Right cardiac atrium (tissue), 5 donors: ENCODE measurements at regions of chr3 and their contacts with region 1.

Region 1: DNA sequence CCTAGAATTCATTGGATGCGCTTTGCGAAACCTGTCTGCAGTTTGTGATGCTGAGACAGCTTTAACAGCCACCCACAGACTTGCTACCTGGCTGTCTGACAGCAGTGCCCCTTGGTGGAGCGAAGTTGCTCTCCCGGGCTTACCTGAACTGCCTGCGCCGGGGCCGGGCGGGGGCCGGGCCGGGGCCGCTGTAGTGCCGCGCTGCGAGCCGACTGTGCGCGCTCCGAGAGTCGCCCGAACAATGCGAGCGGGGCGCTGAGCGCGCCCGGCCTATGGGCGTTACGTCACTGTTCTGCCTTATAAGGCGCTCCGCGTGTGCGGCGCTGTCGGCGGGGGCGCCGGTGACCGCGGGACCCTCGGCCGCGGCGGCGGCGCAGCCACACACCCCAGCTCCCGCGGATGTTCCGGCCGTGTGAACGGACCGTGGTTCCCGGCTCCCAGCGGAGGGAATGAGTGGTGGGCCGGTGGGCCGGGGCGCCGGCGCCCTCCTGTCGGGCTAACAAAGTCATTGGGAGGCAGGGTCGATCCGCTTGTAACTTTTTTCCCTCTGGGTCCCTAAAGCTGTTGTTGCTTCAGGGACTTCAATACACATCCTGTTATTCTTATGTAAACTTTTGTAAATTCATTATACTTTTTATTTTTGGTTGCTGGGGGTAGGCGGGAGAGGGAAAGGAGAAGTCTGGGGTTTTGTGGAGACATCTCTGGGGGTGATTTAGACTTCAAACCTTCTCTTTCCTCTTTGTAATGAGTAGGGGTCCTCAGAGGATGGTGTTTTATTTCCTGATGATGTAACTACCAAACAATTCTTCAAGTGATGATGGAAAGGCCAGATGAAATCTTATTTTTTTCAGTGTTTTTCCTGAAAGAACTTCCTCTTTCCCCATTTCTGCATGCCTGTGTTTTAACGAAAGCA is 58.5 kb downstream of the CMSS1 start:
- DNase-seq: peak; percentile 86 to 94 (median 93)
- ATAC-seq: peak; percentile 98
- H3K4me3 ChIP-seq: peak overlapping the region; percentile 99
- H3K27ac ChIP-seq: peak overlapping the region; percentile 99
- H3K4me1 ChIP-seq: peaks cover 3% of the 10 kb centered on the region
- H3K27me3 ChIP-seq: no peaks in the 10 kb centered on the region

Region 2: GRCh38 chr3:99920481-99921376 is 44.5 kb after region 1 on chr3:
- intact Hi-C with region 1: loop called in 2 of 4 experiments (anchors 10 kb)
- DNase-seq: peak; percentile 86 to 92 (median 87)
- ATAC-seq: peak; percentile 86 to 87
- H3K4me3 ChIP-seq: no peak overlapping the region
- H3K27ac ChIP-seq: peak overlapping the region; percentile 96
- H3K4me1 ChIP-seq: peaks cover 9% of the 10 kb centered on the region
- H3K27me3 ChIP-seq: no peaks in the 10 kb centered on the region

Region 3: DNA sequence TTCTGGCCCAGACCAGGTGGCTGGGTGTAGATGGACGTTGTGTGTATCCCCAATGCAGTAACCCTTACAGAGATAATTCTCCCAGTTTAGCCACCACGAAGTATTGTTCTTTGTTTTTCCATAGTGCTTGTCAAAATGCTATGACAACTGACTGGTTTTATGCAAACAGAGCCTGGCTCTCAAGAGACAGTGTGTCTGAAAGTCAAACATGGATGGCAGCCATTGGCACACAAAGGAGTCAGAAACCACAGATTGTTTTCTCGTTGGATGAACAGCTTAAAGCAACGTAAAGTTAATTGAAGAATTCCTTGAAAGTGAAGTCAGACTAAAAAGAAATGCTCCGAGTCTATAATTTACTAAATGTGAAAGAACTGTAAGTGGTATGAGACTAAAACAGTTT is 147.0 kb after region 1 on chr3:
- intact Hi-C with region 1: loop called in 1 of 4 experiments (anchors 10 kb)
- DNase-seq: no peak
- ATAC-seq: no peak
- H3K4me3 ChIP-seq: no peak overlapping the region
- H3K27ac ChIP-seq: no peak overlapping the region
- H3K4me1 ChIP-seq: peaks cover 2% of the 10 kb centered on the region
- H3K27me3 ChIP-seq: no peaks in the 10 kb centered on the region

Region 4: GRCh38 chr3:100047455-100048141 is 171.4 kb after region 1 on chr3:
- intact Hi-C with region 1: loop called in 1 of 4 experiments (anchors 10 kb)
- DNase-seq: no peak
- ATAC-seq: peak; percentile 55 to 58
- H3K4me3 ChIP-seq: no peak overlapping the region
- H3K27ac ChIP-seq: peak overlapping the region; percentile 30
- H3K4me1 ChIP-seq: peaks cover 10% of the 10 kb centered on the region
- H3K27me3 ChIP-seq: no peaks in the 10 kb centered on the region